IMR-90 (cell line): ENCODE measurements at regions of chr1 and their contacts with region 1.

Region 1: GRCh38 chr1:181166377-181167196 is 78.1 kb downstream of the IER5 start:
- DNase-seq: peak; percentile 76
- ATAC-seq: peak; percentile 100
- H3K4me3 ChIP-seq: no peak overlapping the region
- H3K27ac ChIP-seq: no peak overlapping the region
- H3K4me1 ChIP-seq: peaks cover under 1% of the 10 kb centered on the region
- H3K27me3 ChIP-seq: peaks cover 10% of the 10 kb centered on the region; the same call in 1 of the 2 replicates
- CTCF ChIP-seq: peak; percentile 95
- POLR2A ChIP-seq: no peak
- RAD21 ChIP-seq: peak; percentile 95

Region 2: DNA sequence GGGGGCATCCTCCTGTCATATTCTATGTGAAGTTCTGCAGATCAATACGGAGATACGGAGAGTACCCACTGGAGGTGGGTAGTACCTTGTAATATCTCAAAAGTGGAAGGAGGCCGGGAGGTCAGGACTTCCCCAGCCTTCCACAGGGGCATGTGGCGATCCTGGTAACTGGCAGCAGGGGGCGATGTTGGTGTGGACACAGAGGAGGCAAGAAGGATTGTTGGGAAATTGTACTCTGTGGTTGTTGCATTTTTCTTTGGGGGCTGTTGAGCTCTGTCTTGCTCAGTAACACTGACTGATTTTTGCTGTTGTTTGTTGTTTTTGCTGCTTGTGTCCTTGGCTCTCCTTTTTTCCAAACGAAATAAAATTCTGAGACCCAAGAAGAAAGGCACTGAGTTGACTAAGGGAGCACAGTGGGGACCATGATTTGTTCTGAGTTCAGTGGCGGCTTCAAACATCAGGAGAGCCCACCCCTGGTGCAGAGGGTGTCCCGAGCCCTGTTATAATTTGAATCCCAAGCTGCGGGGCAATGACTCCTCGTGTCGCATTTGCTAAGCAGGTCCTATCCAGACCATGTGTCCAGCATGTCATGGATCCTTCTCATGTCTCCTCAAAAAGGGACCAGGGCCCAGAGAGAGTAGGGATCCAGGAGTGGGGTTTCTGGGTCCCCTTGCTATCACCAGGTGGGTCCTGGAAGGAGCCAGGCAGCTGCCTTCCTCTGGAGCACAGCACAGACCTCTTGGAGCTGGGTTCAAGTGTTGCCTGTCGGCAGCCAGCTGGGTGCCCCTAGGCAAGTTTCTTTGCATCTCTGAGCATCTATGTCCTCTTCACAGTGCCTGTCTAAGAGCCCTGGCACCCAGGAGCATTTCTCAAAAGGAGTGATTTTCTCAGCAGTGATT is 913.7 kb before region 1 on chr1:
- CTCF ChIA-PET with region 1: no interaction called
- POLR2A ChIA-PET with region 1: no interaction called
- dilution Hi-C with region 1: no loop called
- in situ Hi-C with region 1: loop called (anchors 25 kb)
- intact Hi-C with region 1: no loop called
- DNase-seq: peak; percentile 65
- ATAC-seq: peak; percentile 74
- H3K4me3 ChIP-seq: no peak overlapping the region
- H3K27ac ChIP-seq: no peak overlapping the region
- H3K4me1 ChIP-seq: peaks cover 4% of the 10 kb centered on the region; the same call in 1 of the 2 replicates
- H3K27me3 ChIP-seq: peaks cover 13% of the 10 kb centered on the region
- CTCF ChIP-seq: peak; percentile 93
- POLR2A ChIP-seq: no peak
- RAD21 ChIP-seq: peak; percentile 94

Region 3: DNA sequence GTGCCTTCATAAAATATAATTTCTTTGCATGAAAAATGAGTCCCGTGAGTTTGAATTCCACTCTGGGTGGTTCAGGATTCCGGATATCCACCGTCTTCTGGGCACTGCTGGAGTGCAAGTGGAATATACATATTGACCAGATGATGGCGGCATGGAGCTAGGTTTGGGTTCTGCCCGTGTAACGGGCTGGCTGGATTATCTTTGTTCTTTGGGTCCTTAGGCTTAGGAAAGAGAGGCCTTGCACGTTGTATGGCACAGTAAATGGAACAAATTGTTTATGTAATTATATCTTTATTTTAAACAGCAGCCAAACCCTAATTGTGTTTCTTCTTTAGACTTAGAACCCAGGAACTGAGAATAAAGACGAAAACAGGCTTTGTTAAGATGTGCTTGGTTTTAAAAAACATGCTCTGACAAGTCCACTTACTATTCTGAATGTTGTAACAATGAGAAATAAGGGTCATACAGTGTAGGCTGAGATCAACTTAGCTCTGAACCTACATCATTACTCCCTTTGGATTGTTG is 650.7 kb before region 1 on chr1:
- CTCF ChIA-PET with region 1: no interaction called
- POLR2A ChIA-PET with region 1: no interaction called
- dilution Hi-C with region 1: no loop called
- in situ Hi-C with region 1: no loop called
- intact Hi-C with region 1: loop called (anchors 1 kb)
- DNase-seq: peak; percentile 84
- ATAC-seq: peak; percentile 98
- H3K4me3 ChIP-seq: no peak overlapping the region
- H3K27ac ChIP-seq: peak overlapping the region; percentile 98; the same call in 1 of the 2 replicates
- H3K4me1 ChIP-seq: peaks cover 8% of the 10 kb centered on the region
- H3K27me3 ChIP-seq: no peaks in the 10 kb centered on the region
- CTCF ChIP-seq: peak; percentile 94
- POLR2A ChIP-seq: peak; percentile 56
- RAD21 ChIP-seq: peak; percentile 98

Region 4: GRCh38 chr1:180533266-180533987 is 633.2 kb before region 1 on chr1:
- CTCF ChIA-PET with region 1: no interaction called
- POLR2A ChIA-PET with region 1: no interaction called
- dilution Hi-C with region 1: no loop called
- in situ Hi-C with region 1: no loop called
- intact Hi-C with region 1: loop called (anchors 5 kb)
- DNase-seq: peak; percentile 64
- ATAC-seq: peak; percentile 75
- H3K4me3 ChIP-seq: no peak overlapping the region
- H3K27ac ChIP-seq: no peak overlapping the region
- H3K4me1 ChIP-seq: no peaks in the 10 kb centered on the region
- H3K27me3 ChIP-seq: 0 out of 2 replicates have a peak, but pooled peaks cover 2% of the 10 kb centered on the region
- CTCF ChIP-seq: peak; percentile 91
- POLR2A ChIP-seq: no peak
- RAD21 ChIP-seq: peak; percentile 96

Region 5: DNA sequence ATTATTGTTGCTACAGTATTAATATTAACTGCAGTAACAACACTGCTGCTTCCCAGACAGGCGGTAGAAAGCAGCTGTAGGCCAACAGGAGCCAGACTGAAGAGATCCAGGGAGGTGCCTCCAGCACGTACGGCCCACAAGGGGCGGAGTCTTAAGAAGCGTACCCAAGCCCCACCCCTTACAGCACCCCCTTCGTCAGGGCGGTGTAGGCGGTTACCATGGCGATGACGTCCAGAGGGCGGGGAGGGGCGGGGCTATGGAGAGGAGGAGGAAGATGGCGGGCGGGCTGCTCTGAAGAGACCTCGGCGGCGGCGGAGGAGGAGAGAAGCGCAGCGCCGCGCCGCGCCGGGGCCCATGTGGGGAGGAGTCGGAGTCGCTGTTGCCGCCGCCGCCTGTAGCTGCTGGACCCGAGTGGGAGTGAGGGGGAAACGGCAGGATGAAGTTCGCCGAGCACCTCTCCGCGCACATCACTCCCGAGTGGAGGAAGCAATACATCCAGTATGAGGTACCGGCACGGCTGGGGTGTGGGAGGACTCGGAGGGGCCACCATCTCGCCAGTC is 534.7 kb before region 1 on chr1 and contains the start of gene XPR1:
- CTCF ChIA-PET with region 1: no interaction called
- POLR2A ChIA-PET with region 1: no interaction called
- dilution Hi-C with region 1: no loop called
- in situ Hi-C with region 1: no loop called
- intact Hi-C with region 1: loop called (anchors 5 kb)
- DNase-seq: peak; percentile 99
- ATAC-seq: peak; percentile 99
- H3K4me3 ChIP-seq: peak within 1 kb of the TSS; percentile 94
- H3K27ac ChIP-seq: peak within 1 kb of the TSS; percentile 89
- H3K4me1 ChIP-seq: no peaks in the 10 kb centered on the region
- H3K27me3 ChIP-seq: no peaks in the 10 kb centered on the region
- CTCF ChIP-seq: peak; percentile 37
- POLR2A ChIP-seq: peak; percentile 74
- RAD21 ChIP-seq: peak; percentile 47
- total RNA-seq, gene XPR1: 25.1 and 25.3 TPM in 2 replicates

Region 6: GRCh38 chr1:180881806-180882509 is 284.6 kb before region 1 on chr1:
- CTCF ChIA-PET with region 1: interaction called, 3 read pairs
- POLR2A ChIA-PET with region 1: no interaction called
- dilution Hi-C with region 1: no loop called
- in situ Hi-C with region 1: no loop called
- intact Hi-C with region 1: loop called (anchors 1 kb)
- DNase-seq: peak; percentile 67
- ATAC-seq: peak; percentile 75
- H3K4me3 ChIP-seq: no peak overlapping the region
- H3K27ac ChIP-seq: no peak overlapping the region
- H3K4me1 ChIP-seq: peaks cover 4% of the 10 kb centered on the region
- H3K27me3 ChIP-seq: no peaks in the 10 kb centered on the region
- CTCF ChIP-seq: peak; percentile 70
- POLR2A ChIP-seq: no peak
- RAD21 ChIP-seq: peak; percentile 62

Region 7: DNA sequence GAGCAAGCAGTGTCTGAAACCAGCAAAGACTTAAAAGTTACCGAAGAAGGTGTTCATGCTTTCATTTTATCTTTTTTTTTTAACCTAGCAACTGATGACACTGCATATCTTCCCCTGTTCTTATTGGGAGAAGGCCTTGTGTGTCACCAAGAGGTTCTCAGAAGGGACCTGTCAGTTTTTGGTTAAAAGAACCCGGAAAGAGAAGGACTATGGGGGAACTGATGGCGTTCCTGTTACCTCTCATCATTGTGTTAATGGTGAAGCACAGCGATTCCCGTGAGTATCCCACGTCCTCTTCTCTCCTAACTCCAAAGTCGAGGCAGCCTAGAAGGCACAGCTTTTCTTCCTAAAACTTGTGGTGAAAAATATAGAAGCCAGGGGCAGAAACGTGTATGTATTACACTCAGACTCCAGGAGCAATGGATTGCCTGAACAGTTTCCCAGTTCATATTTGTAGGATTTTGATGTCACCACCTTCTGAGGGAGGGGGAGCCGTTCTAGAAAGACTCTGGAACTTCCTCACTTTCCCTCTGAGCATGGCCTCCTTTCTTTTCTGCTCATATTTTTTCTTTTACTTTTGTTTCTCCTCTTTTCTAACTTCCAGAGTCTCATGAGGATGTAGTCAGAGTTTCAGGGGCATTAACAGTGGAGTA is 132.7 kb before region 1 on chr1 and contains the start of gene MR1:
- CTCF ChIA-PET with region 1: no interaction called
- POLR2A ChIA-PET with region 1: no interaction called
- dilution Hi-C with region 1: no loop called
- in situ Hi-C with region 1: no loop called
- intact Hi-C with region 1: loop called (anchors 1 kb)
- DNase-seq: peak; percentile 83
- ATAC-seq: peak; percentile 94
- H3K4me3 ChIP-seq: peak within 1 kb of the TSS; percentile 47
- H3K27ac ChIP-seq: peak within 1 kb of the TSS; percentile 56
- H3K4me1 ChIP-seq: peaks cover 13% of the 10 kb centered on the region
- H3K27me3 ChIP-seq: no peaks in the 10 kb centered on the region
- CTCF ChIP-seq: no peak
- POLR2A ChIP-seq: no peak
- RAD21 ChIP-seq: no peak
- total RNA-seq, gene MR1: 5.0 and 6.1 TPM in 2 replicates

Region 8: DNA sequence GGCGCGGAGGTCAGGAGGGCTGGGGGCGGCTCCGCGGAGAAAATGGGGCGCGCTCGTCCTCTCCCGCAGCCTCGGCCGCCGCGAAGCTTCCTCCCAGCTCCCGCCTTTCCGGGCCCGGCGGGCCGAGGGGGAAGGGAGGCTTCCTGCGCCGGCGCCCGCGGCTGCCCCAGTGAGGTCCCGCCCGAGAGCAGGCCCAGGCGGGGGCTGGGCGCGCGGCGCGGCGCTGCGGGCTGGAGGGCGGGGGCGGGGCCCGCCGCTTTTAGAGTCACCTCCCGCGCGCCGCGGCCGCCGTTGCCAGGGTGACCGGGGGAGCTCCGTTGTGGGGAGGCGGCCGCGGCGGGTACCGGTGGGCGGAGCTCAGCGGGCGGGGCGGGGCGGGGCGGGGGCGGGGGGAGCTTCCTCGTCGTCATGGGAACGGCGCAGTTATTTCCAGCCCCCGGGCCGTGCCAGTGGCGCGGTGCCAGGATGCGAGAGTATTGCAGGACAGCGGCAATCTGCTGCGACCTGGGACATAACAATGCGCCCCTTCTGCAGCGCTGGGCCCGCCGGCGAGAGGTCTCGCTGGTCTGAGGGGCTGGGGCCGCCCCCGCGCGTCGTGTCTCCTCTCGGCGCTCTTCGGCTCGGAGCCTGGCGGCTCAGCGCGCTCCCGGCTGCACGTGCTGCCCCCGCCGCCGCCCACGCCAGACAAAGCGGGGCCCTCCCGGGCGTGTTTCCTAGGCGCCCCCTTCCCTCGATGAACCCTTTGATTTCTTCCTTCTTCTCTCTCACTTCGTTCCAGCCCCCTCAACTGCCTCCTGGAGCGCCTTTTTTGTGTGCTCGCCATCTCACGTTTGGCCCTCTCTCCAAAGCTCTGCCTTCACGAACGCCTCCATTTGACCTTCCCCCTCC is 61.2 kb before region 1 on chr1:
- CTCF ChIA-PET with region 1: no interaction called
- POLR2A ChIA-PET with region 1: no interaction called
- dilution Hi-C with region 1: no loop called
- in situ Hi-C with region 1: no loop called
- intact Hi-C with region 1: no loop called
- DNase-seq: peak; percentile 83
- ATAC-seq: peak; percentile 93
- H3K4me3 ChIP-seq: peak overlapping the region; percentile 84
- H3K27ac ChIP-seq: peak overlapping the region; percentile 86
- H3K4me1 ChIP-seq: peaks cover 30% of the 10 kb centered on the region
- H3K27me3 ChIP-seq: no peaks in the 10 kb centered on the region
- CTCF ChIP-seq: no peak
- POLR2A ChIP-seq: peak; percentile 53
- RAD21 ChIP-seq: no peak